Heart left ventricle (tissue), 16 donors: ENCODE measurements at regions of chr18 and their contacts with region 1.

Region 1: GRCh38 chr18:27750014-27750413 is 426.9 kb downstream of the CDH2 start:
- DNase-seq: peak in 2 of 5 donors; percentile 20 to 31
- ATAC-seq: peak; percentile 69 to 81 (median 70)
- H3K4me3 ChIP-seq: no peak overlapping the region
- H3K27ac ChIP-seq: no peak overlapping the region
- H3K4me1 ChIP-seq: no peaks in the 10 kb centered on the region
- H3K27me3 ChIP-seq: no peaks in the 10 kb centered on the region
- CTCF ChIP-seq: peak; percentile 31 to 66 (median 56)
- POLR2A ChIP-seq: no peak

Region 2: DNA sequence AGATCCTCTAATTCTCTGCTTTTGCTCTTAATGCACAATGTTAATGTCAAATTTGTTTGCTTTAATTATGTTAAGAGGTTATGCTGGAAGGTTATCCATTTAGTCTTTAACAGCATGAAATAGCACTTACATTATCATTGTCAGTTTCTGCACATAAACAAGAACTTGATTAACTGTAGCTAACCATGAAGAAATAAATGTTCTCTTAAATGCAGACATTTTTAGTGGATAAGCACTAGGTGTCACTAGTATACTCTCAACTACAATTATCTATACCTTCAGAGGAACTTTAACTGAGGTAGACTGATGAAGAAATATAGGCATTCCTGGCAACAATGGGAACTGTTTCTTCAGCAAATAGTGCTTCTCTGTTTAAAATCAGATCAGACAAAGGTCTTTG is 386.1 kb before region 1 on chr18:
- intact Hi-C with region 1: loop called in 1 of 10 experiments (anchors 10 kb)
- DNase-seq: no peak
- ATAC-seq: no peak
- H3K4me3 ChIP-seq: no peak overlapping the region
- H3K27ac ChIP-seq: no peak overlapping the region
- H3K4me1 ChIP-seq: no peaks in the 10 kb centered on the region
- H3K27me3 ChIP-seq: no peaks in the 10 kb centered on the region
- CTCF ChIP-seq: peak in 7 of 12 donors; percentile 18 to 43 (median 36)
- POLR2A ChIP-seq: no peak

Region 3: DNA sequence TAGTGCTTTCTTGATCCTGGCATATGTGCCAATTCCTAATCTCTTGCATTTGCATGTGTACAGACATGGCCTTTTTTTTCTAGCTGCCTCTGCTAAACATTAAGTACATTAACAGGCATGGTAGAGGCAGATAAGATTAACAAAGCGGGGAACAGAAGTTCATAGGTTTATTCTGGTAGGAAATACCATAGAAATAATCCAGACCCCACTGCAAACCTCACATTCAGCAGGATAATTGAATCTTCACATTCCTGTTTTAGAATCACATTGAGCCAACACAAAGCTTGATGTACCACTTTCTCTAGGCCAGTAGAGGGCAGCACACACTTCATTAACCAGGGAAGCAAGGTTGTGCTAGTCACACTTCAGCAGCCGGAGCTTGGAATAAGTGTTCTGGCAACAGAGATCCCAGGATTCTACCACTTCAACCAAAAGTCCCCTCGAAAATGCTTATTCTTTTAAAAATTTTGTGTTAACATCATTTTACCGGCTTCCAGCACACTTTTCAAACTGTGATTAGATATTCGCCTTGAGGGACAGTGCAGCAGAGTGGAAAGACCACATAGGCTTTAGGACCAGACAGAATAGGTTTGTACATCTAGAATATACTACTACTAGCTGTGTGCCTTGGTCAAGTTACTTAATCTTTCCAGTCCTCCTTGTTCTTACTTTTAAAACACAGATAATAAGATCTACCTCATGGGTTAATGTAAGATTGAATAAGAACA is 144.7 kb before region 1 on chr18:
- intact Hi-C with region 1: loop called (anchors 1 to 5 kb)
- DNase-seq: peak in 4 of 5 donors; percentile 33 to 56 (median 46)
- ATAC-seq: peak in 3 of 4 donors; percentile 86 to 94 (median 86)
- H3K4me3 ChIP-seq: no peak overlapping the region
- H3K27ac ChIP-seq: no peak overlapping the region
- H3K4me1 ChIP-seq: no peaks in the 10 kb centered on the region
- H3K27me3 ChIP-seq: no peaks in the 10 kb centered on the region
- CTCF ChIP-seq: peak; percentile 67 to 87 (median 72)
- POLR2A ChIP-seq: no peak

Region 4: GRCh38 chr18:27685807-27686412 is 64.1 kb before region 1 on chr18:
- intact Hi-C with region 1: loop called in 4 of 10 experiments (anchors 5 to 10 kb)
- DNase-seq: peak in 1 of 5 donors; percentile 27
- ATAC-seq: no peak
- H3K4me3 ChIP-seq: no peak overlapping the region
- H3K27ac ChIP-seq: no peak overlapping the region
- H3K4me1 ChIP-seq: peaks cover 0 to 7% (median 0%) of the 10 kb centered on the region in 12 donors
- H3K27me3 ChIP-seq: no peaks in the 10 kb centered on the region
- CTCF ChIP-seq: peak; percentile 39 to 68 (median 50)
- POLR2A ChIP-seq: no peak